T-cell (primary cell): ENCODE measurements at regions of chr12 and their contacts with region 1.

Region 1: DNA sequence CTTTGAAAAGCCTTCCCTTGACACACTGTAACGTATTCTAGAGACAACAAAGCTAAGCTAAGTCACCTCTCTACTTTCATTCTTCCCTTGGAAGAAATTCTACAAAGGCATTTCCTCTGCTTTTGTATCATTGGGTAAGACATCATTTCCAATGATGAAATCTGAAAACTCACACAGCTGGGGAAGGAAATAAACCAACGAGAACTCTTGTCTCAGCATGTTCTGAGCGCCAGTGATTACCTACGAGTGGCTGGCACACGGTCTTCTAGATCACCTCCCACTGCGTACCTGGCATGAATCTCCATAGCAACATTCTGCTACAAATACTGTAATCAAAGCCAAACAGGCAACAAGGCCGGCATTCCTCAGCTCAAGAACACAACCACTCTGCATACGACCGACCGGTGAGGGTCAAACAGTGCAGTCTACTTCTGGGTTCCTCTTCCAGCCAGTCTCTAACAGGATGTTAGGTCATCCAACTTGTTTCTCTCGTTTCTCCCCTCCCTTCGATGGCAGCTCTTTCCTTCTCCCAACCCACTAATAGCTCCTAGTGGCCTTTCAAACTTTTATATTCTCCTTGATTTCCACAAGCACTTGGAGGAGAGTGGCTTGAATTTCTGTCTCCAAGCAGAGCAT is 7.6 kb downstream of the VPS37B start:
- DNase-seq: peak in 32 of 35 experiments; percentile 47 to 85 (median 64)
- ATAC-seq: peak; percentile 72 to 93 (median 76)
- H3K4me3 ChIP-seq: peak overlapping the region; percentile 18 to 50
- H3K4me3 Mint-ChIP-seq: peak overlapping the region; percentile 66 to 87 (median 76)
- H3K27ac ChIP-seq: peak overlapping the region; percentile 78
- H3K27ac Mint-ChIP-seq: peak overlapping the region; percentile 95 to 98
- H3K4me1 ChIP-seq: peaks cover 34 to 62% of the 10 kb centered on the region in 2 experiments
- H3K4me1 Mint-ChIP-seq: peaks cover 84 to 91% (median 90%) of the 10 kb centered on the region in 3 donors
- H3K27me3 ChIP-seq: no peaks in the 10 kb centered on the region
- H3K27me3 Mint-ChIP-seq: no peaks in the 10 kb centered on the region

Region 2: DNA sequence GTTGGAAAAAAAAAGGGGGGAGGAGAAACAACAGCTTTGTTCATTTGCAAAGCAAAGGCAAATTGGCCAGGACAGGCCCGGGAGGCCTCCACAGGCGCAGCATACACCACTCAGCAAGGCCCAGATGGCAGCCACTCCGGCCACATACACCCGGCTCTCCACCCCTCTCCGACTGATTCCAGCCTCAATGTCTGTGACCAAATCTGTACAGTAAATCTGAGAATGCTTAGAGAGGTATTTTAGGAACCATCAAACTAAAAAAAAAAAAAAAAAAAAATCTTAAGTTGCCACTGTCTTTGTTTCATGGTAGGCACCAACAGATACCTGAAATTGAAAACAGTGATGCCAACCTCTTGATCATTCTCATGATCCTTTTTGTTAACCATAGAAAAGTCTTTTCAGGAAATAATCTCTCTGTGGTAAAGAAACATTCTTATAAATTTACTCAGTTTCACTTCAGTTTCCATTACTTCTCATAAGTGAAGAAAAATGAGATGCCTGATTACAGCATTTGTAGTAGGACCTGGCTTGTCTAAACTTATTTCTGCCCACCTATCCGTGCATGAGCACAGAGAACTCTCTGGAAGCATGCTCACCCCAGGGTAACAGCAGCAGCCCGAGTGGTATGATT is 12.6 kb before region 1 on chr12:
- CTCF ChIA-PET with region 1: interaction called, 3 to 9 read pairs
- POLR2A ChIA-PET with region 1: interaction called, 4 to 13 read pairs
- DNase-seq: peak in 1 of 35 experiments; percentile 22
- ATAC-seq: no peak
- H3K4me3 ChIP-seq: no peak overlapping the region
- H3K4me3 Mint-ChIP-seq: peak overlapping the region in 2 of 3 donors; percentile 29 to 53
- H3K27ac ChIP-seq: peak overlapping the region; percentile 4
- H3K27ac Mint-ChIP-seq: peak overlapping the region; percentile 71 to 83
- H3K4me1 ChIP-seq: peaks cover 35 to 84% of the 10 kb centered on the region in 2 experiments
- H3K4me1 Mint-ChIP-seq: peaks cover 95% of the 10 kb centered on the region in 3 donors
- H3K27me3 ChIP-seq: no peaks in the 10 kb centered on the region
- H3K27me3 Mint-ChIP-seq: no peaks in the 10 kb centered on the region

Region 3: GRCh38 chr12:122909442-122910288 is 21.3 kb after region 1 on chr12:
- CTCF ChIA-PET with region 1: no interaction called
- POLR2A ChIA-PET with region 1: interaction called, 3 to 15 read pairs
- DNase-seq: no peak
- ATAC-seq: no peak
- H3K4me3 ChIP-seq: no peak overlapping the region
- H3K4me3 Mint-ChIP-seq: no peak overlapping the region
- H3K27ac ChIP-seq: no peak overlapping the region
- H3K27ac Mint-ChIP-seq: no peak overlapping the region
- H3K4me1 ChIP-seq: no peaks in the 10 kb centered on the region
- H3K4me1 Mint-ChIP-seq: no peaks in the 10 kb centered on the region
- H3K27me3 ChIP-seq: peaks cover 0 to 5% of the 10 kb centered on the region in 2 experiments
- H3K27me3 Mint-ChIP-seq: no peaks in the 10 kb centered on the region

Region 4: GRCh38 chr12:123043536-123044001 is 155.2 kb after region 1 on chr12:
- CTCF ChIA-PET with region 1: no interaction called
- POLR2A ChIA-PET with region 1: no interaction called
- DNase-seq: peak; percentile 47 to 83 (median 67)
- ATAC-seq: peak; percentile 95 to 97 (median 96)
- H3K4me3 ChIP-seq: peak overlapping the region in 1 of 2 donors; percentile 30
- H3K4me3 Mint-ChIP-seq: peak overlapping the region in 2 of 3 donors; percentile 9 to 24
- H3K27ac ChIP-seq: peak overlapping the region; percentile 38
- H3K27ac Mint-ChIP-seq: peak overlapping the region; percentile 72 to 82
- H3K4me1 ChIP-seq: peaks cover 12 to 23% of the 10 kb centered on the region in 2 experiments
- H3K4me1 Mint-ChIP-seq: peaks cover 29 to 61% (median 38%) of the 10 kb centered on the region in 3 donors
- H3K27me3 ChIP-seq: no peaks in the 10 kb centered on the region
- H3K27me3 Mint-ChIP-seq: no peaks in the 10 kb centered on the region